ENCODE measurements at regions of chr1 and their contacts with region 1.

Region 1: DNA sequence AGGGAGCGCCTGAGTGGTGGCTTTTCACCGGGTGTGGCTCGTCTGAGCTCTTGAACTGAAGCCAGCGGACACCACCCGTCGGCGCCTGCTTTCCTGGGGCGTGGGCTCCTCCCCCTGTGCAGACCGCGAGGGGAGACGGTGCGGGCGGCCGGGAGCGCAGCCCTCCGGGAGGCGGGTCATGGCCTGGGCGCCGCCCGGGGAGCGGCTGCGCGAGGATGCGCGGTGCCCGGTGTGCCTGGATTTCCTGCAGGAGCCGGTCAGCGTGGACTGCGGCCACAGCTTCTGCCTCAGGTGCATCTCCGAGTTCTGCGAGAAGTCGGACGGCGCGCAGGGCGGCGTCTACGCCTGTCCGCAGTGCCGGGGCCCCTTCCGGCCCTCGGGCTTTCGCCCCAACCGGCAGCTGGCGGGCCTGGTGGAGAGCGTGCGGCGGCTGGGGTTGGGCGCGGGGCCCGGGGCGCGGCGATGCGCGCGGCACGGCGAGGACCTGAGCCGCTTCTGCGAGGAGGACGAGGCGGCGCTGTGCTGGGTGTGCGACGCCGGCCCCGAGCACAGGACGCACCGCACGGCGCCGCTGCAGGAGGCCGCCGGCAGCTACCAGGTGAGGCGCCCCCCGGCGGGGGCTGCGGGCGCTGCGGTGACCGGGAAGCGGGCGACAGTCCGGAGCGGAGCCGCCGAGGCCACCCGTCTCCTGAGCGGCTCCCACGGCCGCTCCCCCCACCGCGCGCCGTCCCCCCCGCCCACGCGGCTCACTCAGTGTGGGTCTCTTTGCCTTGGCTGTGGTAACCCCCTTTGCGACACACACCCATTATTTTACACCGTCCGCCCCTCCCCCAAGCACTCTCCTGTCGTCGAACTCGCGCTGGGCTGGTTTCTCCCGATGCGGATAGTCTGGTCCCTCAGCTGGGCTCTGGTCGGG is at the start of gene TRIM58:
- DNase-seq: peak; percentile 39
- ATAC-seq: peak; percentile 75
- H3K4me3 Mint-ChIP-seq: peak within 1 kb of the TSS; percentile 72
- H3K27ac Mint-ChIP-seq: no peak within 1 kb of the TSS
- H3K4me1 Mint-ChIP-seq: peaks cover 10% of the 10 kb centered on the region; the same call in 1 of the 2 replicates
- H3K27me3 Mint-ChIP-seq: peaks cover 16% of the 10 kb centered on the region
- CTCF ChIP-seq: peak; percentile 26; the same call in 1 of the 2 replicates
- total RNA-seq, gene TRIM58: 1.0 to 1.9 TPM (median 1.6 TPM) in 3 replicates

Region 2: DNA sequence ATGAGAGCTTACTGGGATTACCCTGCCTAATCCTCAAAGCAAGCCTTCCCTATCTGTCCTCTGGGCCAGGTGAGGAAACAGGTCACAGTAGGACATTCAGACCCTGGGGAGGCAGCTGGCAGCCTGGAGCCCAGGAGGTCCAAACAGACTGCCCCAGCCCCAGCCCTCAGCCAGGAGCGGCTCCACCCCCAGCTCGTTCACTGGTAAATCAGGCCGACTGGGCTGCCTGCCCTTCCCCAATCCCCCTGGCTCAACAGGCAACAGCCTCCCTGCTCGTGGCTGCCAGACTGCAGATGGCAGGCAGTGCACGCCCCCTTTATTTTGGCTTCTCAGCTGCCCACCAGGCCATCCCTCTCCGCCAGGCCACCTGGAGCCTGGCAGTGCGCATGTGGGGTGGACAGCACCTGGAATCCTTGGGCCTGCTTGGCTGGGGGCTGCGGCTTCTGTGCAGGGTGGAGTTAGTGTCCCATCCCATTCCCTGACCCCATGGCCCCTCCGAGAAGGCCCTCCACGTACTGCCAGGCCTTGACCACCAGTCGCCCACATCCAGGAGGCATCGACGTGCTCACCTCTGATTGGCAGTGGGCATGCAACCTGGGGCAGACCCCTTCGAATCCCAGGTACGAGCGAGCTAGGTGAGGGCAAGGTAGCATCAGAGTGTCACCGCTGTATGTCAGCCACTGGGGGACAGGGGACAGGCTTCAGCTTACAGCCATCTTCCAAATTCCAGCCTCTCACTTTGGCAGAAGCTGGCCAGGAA is 767.5 kb before region 1 on chr1:
- CTCF ChIA-PET with region 1: no interaction called
- POLR2A ChIA-PET with region 1: interaction called, 10 read pairs
- DNase-seq: no peak
- ATAC-seq: peak; percentile 67
- H3K4me3 Mint-ChIP-seq: no peak overlapping the region
- H3K27ac Mint-ChIP-seq: no peak overlapping the region
- H3K4me1 Mint-ChIP-seq: peaks cover 13% of the 10 kb centered on the region
- H3K27me3 Mint-ChIP-seq: peaks cover 3% of the 10 kb centered on the region; the same call in 1 of the 2 replicates
- CTCF ChIP-seq: no peak

Region 3: GRCh38 chr1:247749870-247750269 is 107.5 kb before region 1 on chr1:
- CTCF ChIA-PET with region 1: no interaction called
- POLR2A ChIA-PET with region 1: no interaction called
- DNase-seq: no peak
- ATAC-seq: no peak
- H3K4me3 Mint-ChIP-seq: no peak overlapping the region
- H3K27ac Mint-ChIP-seq: no peak overlapping the region
- H3K4me1 Mint-ChIP-seq: no peaks in the 10 kb centered on the region
- H3K27me3 Mint-ChIP-seq: no peaks in the 10 kb centered on the region
- CTCF ChIP-seq: no peak